ENCODE measurements at regions of chr16 and their contacts with region 1.

Region 1: GRCh38 chr16:78099372-78100161 is at the start of gene WWOX:
- DNase-seq: peak; percentile 97
- H3K4me3 Mint-ChIP-seq: peak within 1 kb of the TSS; percentile 90
- H3K27ac Mint-ChIP-seq: peak within 1 kb of the TSS; percentile 94
- H3K4me1 Mint-ChIP-seq: peaks cover 21% of the 10 kb centered on the region
- H3K27me3 Mint-ChIP-seq: peaks cover 1% of the 10 kb centered on the region
- total RNA-seq, gene WWOX: 15.7 and 19.0 TPM in 2 replicates

Region 2: GRCh38 chr16:77722309-77723107 is 377.1 kb before region 1 on chr16 and contains the start of gene NUDT7:
- intact Hi-C with region 1: loop called (anchors 1 kb)
- DNase-seq: peak; percentile 93
- H3K4me3 Mint-ChIP-seq: peak within 1 kb of the TSS; percentile 81
- H3K27ac Mint-ChIP-seq: peak within 1 kb of the TSS; percentile 71
- H3K4me1 Mint-ChIP-seq: peaks cover 11% of the 10 kb centered on the region
- H3K27me3 Mint-ChIP-seq: no peaks in the 10 kb centered on the region
- total RNA-seq, gene NUDT7: 8.1 TPM in 2 replicates

Region 3: GRCh38 chr16:78060293-78060692 is 39.3 kb before region 1 on chr16:
- intact Hi-C with region 1: no loop called
- DNase-seq: no peak
- H3K4me3 Mint-ChIP-seq: no peak overlapping the region
- H3K27ac Mint-ChIP-seq: no peak overlapping the region
- H3K4me1 Mint-ChIP-seq: peaks cover 4% of the 10 kb centered on the region
- H3K27me3 Mint-ChIP-seq: peaks cover 8% of the 10 kb centered on the region